Common myeloid progenitor, CD34-positive (primary cell): ENCODE measurements at regions of chr1 and their contacts with region 1.

Region 1: DNA sequence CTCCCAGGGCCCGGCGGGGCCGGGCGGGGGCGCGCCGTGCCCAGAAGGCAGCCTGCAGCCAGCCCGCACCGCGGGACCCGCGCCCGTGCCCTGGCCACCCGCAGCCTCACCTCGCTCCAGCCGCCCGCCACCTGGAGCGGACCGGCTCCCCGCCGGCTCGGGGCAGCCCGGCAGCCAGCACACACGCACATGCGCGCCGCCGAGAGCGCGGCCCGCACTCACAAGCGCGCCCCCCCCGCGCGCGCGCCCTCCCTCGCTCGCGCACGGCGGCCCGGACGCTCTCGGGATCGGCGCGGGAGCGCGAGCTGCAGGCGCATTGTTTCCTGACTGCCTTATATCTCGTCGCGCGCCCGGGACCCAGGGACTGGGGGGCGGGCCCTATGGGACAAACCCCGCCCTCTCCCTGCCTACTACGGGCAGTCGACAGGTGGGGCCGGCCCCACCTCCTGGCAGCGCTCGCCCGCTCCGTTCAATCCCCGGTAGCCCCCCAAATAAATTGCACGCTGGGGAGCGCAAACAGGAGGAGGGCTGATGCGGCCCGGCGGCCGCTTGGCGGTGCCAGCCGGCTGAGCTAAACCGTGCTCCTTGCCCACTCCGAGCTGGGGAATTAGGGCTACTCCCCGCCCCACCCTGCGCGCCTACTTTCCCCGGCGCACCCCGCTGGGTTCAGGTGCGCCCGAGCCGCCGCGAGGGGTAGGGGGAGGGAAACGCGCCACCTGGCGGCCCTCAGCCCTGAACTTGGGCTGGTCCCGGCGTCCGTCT is at the start of gene MYCL:
- DNase-seq: peak; percentile 31 to 63 (median 54)
- H3K4me3 ChIP-seq: peak within 1 kb of the TSS; percentile 32 to 78 (median 70)
- H3K27ac ChIP-seq: no peak within 1 kb of the TSS
- H3K4me1 ChIP-seq: peaks cover 0 to 20% (median 18%) of the 10 kb centered on the region in 4 experiments
- H3K27me3 ChIP-seq: peaks cover 22 to 78% (median 32%) of the 10 kb centered on the region in 5 experiments

Region 2: GRCh38 chr1:39822091-39822490 is 79.8 kb before region 1 on chr1:
- CTCF ChIA-PET with region 1: interaction called, 10 read pairs
- POLR2A ChIA-PET with region 1: no interaction called
- DNase-seq: no peak
- H3K4me3 ChIP-seq: no peak overlapping the region
- H3K27ac ChIP-seq: no peak overlapping the region
- H3K4me1 ChIP-seq: peaks cover 0 to 4% (median 4%) of the 10 kb centered on the region in 4 experiments
- H3K27me3 ChIP-seq: peaks cover 0 to 2% (median 0%) of the 10 kb centered on the region in 5 experiments